ENCODE measurements at regions of chr2 and their contacts with region 1.

Region 1: DNA sequence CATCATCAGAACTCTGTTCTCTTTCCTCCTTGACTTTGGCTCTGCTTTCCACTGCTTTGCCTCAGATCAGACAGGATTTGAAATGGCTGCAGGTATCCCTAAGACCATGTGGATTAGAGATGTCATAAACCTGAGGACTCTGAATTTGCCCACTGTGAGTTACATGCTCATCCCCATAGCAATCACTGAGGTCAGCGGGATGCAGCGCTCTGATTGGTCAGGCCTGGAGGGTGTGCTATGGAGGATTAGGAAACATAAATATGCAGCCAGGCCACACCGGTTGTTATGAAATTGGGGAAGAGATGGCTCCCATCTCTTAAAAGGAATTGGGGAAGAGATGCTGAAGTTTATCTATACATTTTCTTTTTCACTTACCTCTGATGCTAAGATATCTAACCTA is 73.7 kb upstream of the DNAJC10 start:
- DNase-seq: peak; percentile 27 to 95 (median 68)

Region 2: DNA sequence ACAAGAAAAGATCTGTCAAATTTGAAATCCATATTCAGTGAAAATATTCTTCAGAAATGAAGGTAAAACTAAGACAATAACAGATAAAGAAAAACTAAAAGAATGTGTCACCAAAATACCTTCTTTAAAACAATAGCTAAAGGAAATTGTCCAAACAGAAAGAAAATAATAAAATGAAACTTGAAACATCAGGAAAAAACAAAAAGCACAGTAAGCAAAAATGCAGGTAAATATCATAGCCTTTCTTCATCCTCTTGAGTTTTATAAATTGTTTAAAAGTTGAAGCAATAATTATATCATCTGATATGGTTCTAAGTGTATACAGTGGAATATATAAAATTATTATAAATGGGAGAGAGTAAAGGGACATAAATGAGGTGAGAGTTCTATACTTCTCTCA is 111.7 kb before region 1 on chr2:
- intact Hi-C with region 1: loop called (anchors 10 kb)
- DNase-seq: no peak

Region 3: GRCh38 chr2:182694189-182694588 is 51.9 kb after region 1 on chr2:
- intact Hi-C with region 1: no loop called
- DNase-seq: no peak

Region 4: GRCh38 chr2:182740701-182741100 is 98.4 kb after region 1 on chr2:
- intact Hi-C with region 1: no loop called
- DNase-seq: no peak

Measured in posterior cingulate gyrus (tissue), 11 donors.